ENCODE measurements at regions of chr10 and their contacts with region 1.

Region 1: DNA sequence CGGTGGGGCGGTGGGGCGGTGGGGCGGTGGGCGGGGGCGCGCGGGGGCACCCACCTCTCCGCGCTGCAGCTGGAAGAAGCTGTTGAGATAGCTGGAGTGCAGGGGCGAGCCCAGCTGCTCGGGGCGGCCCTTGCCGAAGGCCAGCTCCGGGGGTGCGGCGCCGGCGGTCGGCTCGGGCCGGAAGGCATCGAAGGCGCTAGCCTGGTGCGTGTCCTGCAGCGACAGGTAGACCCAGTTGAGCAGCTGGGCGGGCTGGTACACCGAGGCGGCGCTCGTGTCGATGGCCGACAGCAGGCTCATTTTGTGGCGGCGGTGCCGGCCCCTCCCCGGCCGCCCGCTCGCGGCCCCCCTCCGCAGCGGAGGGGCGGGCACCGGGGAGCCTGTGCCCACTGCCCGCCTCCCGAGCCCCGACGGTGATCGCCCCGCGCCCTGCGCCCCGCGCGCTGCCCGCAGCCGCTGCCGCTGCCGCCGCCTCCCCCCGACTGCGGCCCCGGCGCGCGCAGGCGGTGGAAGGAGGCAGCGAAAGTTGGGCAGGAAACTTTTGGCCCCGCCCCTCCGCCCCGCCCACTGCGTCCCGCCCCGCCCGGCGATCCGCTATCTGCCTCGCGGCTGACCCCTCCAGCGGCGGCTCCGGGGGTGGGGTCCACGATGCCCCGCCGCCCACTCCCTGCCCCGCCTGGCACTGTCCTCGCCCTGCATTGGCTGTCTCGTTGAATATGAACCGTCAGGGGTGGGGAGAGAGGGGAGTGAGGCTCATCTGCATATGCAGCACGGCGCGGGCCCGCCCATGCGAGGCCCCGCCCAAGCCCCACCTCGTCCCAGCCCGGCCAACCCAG is at the start of gene ZCCHC24:
- DNase-seq: peak; percentile 99
- H3K4me3 ChIP-seq: peak within 1 kb of the TSS; percentile 94 to 100 (median 99)
- H3K27ac ChIP-seq: peak within 1 kb of the TSS in 3 of 4 donors; percentile 98 to 100 (median 99)
- H3K4me1 ChIP-seq: peaks cover 0 to 48% (median 44%) of the 10 kb centered on the region in 4 donors
- H3K27me3 ChIP-seq: no peaks in the 10 kb centered on the region
- CTCF ChIP-seq: no peak
- EP300 ChIP-seq: peak in 1 of 4 donors; percentile 4
- POLR2A ChIP-seq: no peak
- total RNA-seq, gene ZCCHC24: 82.6 to 141 (median 121) TPM

Region 2: DNA sequence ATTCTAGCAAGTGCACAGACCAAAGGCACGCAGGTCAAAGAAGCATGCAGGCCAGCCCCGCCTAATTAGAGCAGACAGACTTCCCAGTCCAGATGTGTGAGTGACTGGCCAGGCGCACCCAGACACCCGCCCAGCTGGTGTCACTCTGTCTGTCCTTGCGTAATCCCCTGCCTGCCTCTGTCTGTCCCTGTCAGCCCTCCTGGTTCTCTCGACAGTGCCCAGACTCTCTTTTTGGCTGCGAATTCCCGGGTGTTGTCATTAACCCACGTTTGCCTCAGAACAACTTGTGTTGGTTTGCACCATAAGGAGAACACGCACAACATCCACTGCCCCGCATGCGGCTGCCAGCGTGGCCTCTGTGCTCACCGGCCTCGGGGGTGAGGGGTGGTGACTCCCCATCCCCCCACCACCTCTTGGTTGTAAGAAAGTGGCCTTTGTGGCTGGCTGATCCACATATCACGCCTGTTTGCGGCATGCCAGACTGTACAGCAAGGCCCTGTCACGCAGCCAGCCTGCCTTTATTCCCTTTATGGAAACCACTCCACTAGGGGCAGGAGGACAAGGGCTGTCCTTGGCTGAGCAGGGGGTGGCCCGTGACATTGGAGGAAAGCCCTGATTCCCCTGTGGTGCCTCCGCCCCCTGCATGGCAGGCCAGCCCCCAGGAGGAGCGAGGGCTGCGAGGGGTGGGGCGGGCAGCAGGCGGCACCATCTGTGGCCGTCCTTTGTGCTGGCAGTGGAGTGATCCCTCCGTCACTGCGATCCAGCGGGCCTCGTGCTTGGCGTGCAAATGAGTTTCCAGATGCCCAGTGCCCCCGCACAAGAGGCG is 170.9 kb before region 1 on chr10:
- intact Hi-C with region 1: loop called (anchors 5 kb)
- DNase-seq: peak; percentile 98
- H3K4me3 ChIP-seq: no peak overlapping the region
- H3K27ac ChIP-seq: peak overlapping the region; percentile 71 to 96 (median 90)
- H3K4me1 ChIP-seq: peaks cover 0 to 86% (median 71%) of the 10 kb centered on the region in 4 donors
- H3K27me3 ChIP-seq: no peaks in the 10 kb centered on the region
- CTCF ChIP-seq: peak in 3 of 4 experiments; percentile 27 to 44 (median 38)
- EP300 ChIP-seq: peak; percentile 77 to 97 (median 90)
- POLR2A ChIP-seq: no peak

Region 3: DNA sequence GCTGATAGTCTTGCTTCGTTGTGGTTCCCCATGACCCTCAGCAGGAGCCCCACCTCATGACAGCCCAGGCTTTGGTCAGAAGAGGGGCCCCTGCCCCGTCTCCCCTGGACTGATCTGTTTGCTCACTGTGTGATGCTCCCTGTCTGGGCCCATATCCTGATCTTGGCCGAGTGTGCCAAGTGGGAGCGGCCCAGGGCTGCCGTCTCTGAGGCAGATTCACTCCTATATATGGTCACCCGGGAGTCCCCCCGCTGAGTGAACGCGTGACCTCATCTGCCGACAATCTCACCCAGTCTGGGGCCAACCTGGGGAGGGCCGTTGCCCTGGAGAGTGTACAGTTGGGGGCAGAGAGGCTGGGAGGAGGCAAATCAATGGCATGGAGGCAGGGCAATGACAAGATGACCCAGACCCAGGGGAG is 63.5 kb before region 1 on chr10:
- intact Hi-C with region 1: loop called (anchors 2 kb)
- DNase-seq: peak; percentile 97
- H3K4me3 ChIP-seq: peak overlapping the region in 1 of 4 donors; percentile 3
- H3K27ac ChIP-seq: peak overlapping the region in 2 of 4 donors; percentile 90 to 91
- H3K4me1 ChIP-seq: peaks cover 3 to 59% (median 53%) of the 10 kb centered on the region in 4 donors
- H3K27me3 ChIP-seq: no peaks in the 10 kb centered on the region
- CTCF ChIP-seq: no peak
- EP300 ChIP-seq: peak in 2 of 4 donors; percentile 32 to 58
- POLR2A ChIP-seq: no peak

Region 4: DNA sequence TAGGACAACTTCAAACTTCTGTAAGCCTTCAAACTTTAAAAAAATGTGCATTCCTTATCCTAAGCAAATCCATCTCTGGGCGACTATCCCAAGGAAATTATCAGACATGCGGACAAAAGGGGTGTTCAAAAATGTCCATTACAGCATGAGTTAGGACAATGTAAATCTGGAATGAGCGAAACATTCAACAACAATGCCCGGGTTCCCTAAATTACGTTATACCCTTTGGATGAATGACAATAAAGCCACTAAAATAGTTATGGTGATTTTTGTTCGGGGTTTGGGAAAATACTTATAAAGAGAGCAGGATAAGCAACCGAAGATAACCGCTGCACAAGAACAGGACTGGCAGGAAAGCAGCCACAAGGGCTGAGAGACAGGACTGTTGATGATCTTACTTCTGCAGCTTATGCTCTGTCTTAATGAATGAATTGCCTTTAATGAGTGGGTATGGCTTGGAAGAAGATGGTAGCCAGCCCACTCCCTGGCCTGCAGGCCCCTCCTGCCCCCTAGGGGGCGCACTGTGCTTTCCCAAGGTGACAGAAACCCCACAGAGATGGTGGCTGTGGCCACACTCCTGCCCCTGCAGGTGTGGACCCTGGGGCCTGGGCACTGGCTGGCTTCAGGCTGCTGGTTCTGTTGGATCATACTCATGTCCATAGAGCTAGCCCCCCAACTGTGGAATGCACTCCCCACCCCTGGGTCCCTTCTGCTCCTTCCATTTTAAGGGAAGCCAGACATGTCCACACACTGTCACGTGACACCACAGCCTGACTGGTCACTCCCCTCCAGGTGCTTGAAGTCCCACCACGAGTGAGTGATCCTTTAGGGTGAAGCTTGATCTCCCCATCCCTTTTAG is 45.0 kb before region 1 on chr10:
- intact Hi-C with region 1: loop called (anchors 2 kb)
- DNase-seq: no peak
- H3K4me3 ChIP-seq: no peak overlapping the region
- H3K27ac ChIP-seq: no peak overlapping the region
- H3K4me1 ChIP-seq: no peaks in the 10 kb centered on the region
- H3K27me3 ChIP-seq: no peaks in the 10 kb centered on the region
- CTCF ChIP-seq: peak; percentile 8 to 59 (median 42)
- EP300 ChIP-seq: no peak
- POLR2A ChIP-seq: no peak

Region 5: GRCh38 chr10:79487296-79488194 is 42.2 kb after region 1 on chr10:
- intact Hi-C with region 1: no loop called
- DNase-seq: peak; percentile 83
- H3K4me3 ChIP-seq: no peak overlapping the region
- H3K27ac ChIP-seq: peak overlapping the region; percentile 45 to 77 (median 69)
- H3K4me1 ChIP-seq: peaks cover 0 to 38% (median 27%) of the 10 kb centered on the region in 4 donors
- H3K27me3 ChIP-seq: no peaks in the 10 kb centered on the region
- CTCF ChIP-seq: peak; percentile 42 to 64 (median 54)
- EP300 ChIP-seq: no peak
- POLR2A ChIP-seq: no peak

Region 6: DNA sequence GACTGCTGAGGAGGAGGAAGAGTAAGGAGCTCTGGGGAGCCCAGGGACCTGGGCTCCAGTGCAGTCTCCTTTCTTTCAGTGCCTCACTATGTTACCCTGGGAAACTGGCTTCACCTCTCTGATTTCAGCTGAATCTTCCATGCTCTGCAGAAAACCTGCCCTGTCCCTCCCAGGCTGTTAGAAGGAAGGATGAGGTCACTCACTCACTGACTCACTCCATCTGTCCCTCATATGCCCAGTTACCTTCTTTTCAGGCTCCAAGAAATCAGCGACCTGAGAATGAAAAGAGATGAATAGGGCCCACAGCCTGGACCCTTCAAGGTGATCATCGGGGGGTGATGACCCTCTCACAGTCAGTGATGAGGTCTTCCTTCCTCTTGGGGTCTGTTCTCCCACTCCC is 114.4 kb after region 1 on chr10:
- intact Hi-C with region 1: no loop called
- DNase-seq: no peak
- H3K4me3 ChIP-seq: no peak overlapping the region
- H3K27ac ChIP-seq: no peak overlapping the region
- H3K4me1 ChIP-seq: peaks cover 0 to 5% (median 0%) of the 10 kb centered on the region in 4 donors
- H3K27me3 ChIP-seq: peaks cover 0 to 5% (median 0%) of the 10 kb centered on the region in 3 donors
- CTCF ChIP-seq: no peak
- EP300 ChIP-seq: no peak
- POLR2A ChIP-seq: no peak